ENCODE measurements at regions of chr2 and their contacts with region 1.

Region 1: DNA sequence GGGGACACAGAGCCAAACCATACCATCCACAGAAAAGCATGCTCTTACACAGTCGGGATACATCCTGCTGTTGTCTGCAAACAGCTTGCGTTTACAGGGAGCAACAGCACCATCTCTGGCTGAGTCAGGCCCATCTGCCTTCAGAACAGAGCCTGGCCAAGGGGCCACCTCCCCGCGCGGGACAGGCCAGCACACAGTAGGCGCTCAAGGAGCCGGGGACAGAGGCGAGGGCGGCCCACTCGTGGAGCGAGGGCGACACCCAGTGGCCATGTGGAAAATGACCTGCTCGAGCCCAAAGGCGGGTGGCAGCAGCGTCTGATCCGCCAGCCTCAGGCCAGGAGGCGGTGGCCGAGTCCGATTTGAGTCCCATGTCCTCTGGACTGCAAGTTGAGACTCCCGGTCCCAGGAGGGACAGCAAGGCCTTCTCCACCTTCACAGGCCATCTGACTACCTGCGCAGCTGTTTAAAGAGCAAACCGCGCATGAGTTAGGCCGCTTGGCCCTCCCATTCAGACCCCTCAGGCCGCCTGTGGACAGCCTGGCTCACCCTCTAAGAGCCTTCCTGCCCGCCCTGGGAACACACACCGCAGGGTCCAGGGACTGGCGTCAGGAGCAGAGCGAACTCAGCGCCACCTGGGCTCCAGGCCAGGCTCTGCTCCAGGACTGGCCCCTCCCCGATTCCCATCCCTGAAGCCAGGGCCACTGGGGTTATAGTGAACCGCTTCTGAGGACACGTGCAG is 38.3 kb downstream of the TTC32 start:
- DNase-seq: peak; percentile 76
- H3K4me3 Mint-ChIP-seq: no peak overlapping the region
- H3K27ac Mint-ChIP-seq: no peak overlapping the region
- H3K4me1 Mint-ChIP-seq: peaks cover 5% of the 10 kb centered on the region
- H3K27me3 Mint-ChIP-seq: peaks cover 1% of the 10 kb centered on the region

Region 2: DNA sequence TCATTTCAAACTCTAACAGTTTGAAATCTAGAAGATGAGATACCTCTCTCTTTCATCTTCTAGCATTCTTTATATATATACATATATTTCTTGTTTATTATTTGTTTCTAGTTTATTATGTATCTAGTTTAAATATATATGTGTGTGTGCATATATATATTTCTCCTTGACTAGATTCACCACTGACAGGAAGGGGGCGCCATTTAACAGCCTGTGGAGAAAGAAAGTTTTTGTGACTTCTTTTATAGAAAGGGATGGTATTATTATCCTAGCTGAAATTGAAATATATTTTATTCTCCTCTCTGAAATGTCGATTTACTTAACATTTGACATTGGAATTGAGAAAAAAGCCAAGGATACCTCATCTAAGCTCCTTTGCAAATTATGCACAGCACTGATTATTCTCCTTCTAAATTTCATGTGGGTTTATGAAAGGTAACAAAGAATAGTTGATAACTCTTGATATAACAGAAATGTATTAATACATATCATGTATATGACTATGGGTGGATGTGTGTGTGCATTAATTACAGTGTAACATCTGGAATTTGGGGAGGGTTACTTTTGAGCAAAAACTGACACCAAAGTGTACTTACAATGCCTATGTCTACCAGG is 1113.5 kb before region 1 on chr2:
- CTCF ChIA-PET with region 1: interaction called, 9 read pairs
- POLR2A ChIA-PET with region 1: no interaction called
- intact Hi-C with region 1: loop called (anchors 1 kb)
- DNase-seq: peak; percentile 44
- H3K4me3 Mint-ChIP-seq: no peak overlapping the region
- H3K27ac Mint-ChIP-seq: no peak overlapping the region
- H3K4me1 Mint-ChIP-seq: no peaks in the 10 kb centered on the region
- H3K27me3 Mint-ChIP-seq: no peaks in the 10 kb centered on the region

Region 3: DNA sequence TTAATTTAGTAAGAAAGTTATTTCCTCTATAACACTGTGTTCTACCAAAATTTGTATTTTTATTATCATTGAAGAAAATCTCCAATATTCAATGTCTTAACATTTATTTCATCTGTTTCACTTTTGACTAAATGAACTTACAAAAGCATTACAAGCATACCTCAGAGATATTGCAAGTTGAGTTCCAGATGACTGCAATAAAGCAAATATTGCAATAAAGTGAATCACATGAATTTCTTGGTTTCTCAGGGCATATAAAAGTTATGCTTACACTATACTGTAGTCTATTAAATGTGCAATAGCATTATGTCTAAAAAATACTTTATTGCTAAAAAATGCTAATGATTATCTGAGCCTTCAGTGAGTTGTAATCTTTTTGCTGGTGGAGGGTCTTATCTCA is 40.0 kb before region 1 on chr2:
- CTCF ChIA-PET with region 1: no interaction called
- POLR2A ChIA-PET with region 1: no interaction called
- intact Hi-C with region 1: no loop called
- DNase-seq: no peak
- H3K4me3 Mint-ChIP-seq: no peak overlapping the region
- H3K27ac Mint-ChIP-seq: no peak overlapping the region
- H3K4me1 Mint-ChIP-seq: no peaks in the 10 kb centered on the region
- H3K27me3 Mint-ChIP-seq: peaks cover 29% of the 10 kb centered on the region

Measured in activated CD4-positive, alpha-beta memory T cell treated with anti-CD3 and anti-CD28 coated beads for 36 hours (primary cell).